Aorta (tissue), 5 donors: ENCODE measurements at regions of chr5 and their contacts with region 1.

Region 1: GRCh38 chr5:54524704-54525103 is 7.1 kb downstream of the SNX18 start:
- DNase-seq: peak; percentile 83 to 85
- ATAC-seq: peak; percentile 27
- H3K4me3 ChIP-seq: peak overlapping the region; percentile 4 to 65
- H3K27ac ChIP-seq: peak overlapping the region; percentile 3 to 77
- H3K4me1 ChIP-seq: peaks cover 3 to 6% of the 10 kb centered on the region in 2 donors
- H3K27me3 ChIP-seq: no peaks in the 10 kb centered on the region

Region 2: DNA sequence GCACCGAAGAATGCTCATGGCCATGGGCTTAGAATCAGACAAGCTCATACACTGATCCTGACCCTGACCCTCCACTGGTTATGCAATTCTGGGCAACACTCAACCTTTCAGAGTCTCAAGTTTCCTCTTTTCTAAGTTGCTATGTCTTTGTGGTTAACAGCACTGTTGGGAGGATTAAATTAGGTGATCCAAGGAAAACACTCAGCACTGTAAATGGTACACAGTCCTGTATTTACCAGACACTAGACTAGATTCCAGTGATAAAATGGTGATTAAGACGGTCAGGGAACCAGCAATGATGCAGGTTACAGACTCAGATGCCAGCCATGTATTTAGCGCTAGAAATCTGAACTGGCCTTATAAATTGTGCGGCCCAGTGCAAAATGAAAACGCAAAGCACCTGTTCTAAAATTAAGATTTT is 222.4 kb before region 1 on chr5:
- intact Hi-C with region 1: no loop called
- DNase-seq: no peak
- ATAC-seq: no peak
- H3K4me3 ChIP-seq: no peak overlapping the region
- H3K27ac ChIP-seq: no peak overlapping the region
- H3K4me1 ChIP-seq: no peaks in the 10 kb centered on the region
- H3K27me3 ChIP-seq: no peaks in the 10 kb centered on the region

Region 3: GRCh38 chr5:54415896-54416601 is 108.7 kb before region 1 on chr5:
- intact Hi-C with region 1: no loop called
- DNase-seq: no peak
- ATAC-seq: no peak
- H3K4me3 ChIP-seq: no peak overlapping the region
- H3K27ac ChIP-seq: no peak overlapping the region
- H3K4me1 ChIP-seq: no peaks in the 10 kb centered on the region
- H3K27me3 ChIP-seq: no peaks in the 10 kb centered on the region

Region 4: DNA sequence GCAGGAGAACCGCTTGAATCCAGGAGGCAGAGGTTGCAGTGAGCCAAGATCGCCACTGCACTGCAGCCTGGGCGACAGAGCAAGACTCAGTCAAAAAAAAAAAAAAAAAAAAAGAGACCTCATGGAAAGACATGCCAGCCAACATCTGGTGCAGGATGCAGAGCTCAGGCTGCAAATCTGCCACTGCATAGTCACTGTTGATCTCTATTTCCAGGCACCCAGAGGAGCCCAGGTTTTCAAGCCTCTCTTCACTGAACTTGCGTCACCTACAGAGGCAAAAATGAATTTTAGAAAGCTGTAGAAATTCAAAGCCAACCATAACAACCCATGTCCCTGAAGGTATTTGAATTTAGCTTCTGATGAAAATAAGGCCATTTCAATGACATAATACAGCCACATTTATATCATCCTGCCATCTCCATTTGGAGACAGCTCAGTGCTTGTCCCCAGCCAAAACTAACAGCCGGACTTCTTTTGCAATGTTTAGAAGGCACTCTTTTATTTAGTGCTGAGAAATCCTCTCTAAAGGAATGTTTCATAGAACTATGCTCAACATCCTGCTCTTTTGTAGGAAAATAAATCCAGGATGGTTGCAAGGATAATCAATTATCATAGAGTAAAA is 106.1 kb after region 1 on chr5:
- intact Hi-C with region 1: loop called (anchors 2 to 5 kb)
- DNase-seq: peak in 1 of 2 donors; percentile 78
- ATAC-seq: peak; percentile 92
- H3K4me3 ChIP-seq: no peak overlapping the region
- H3K27ac ChIP-seq: peak overlapping the region in 1 of 2 donors; percentile 25
- H3K4me1 ChIP-seq: peaks cover 2 to 7% of the 10 kb centered on the region in 2 donors
- H3K27me3 ChIP-seq: no peaks in the 10 kb centered on the region